ENCODE measurements at regions of chr6 and their contacts with region 1.

Region 1: GRCh38 chr6:53651764-53652401 is 13.7 kb downstream of the KLHL31 start:
- DNase-seq: peak; percentile 91

Region 2: GRCh38 chr6:53171605-53172446 is 480.1 kb before region 1 on chr6:
- intact Hi-C with region 1: loop called in 1 of 2 experiments (anchors 10 kb)
- DNase-seq: peak; percentile 97

Region 3: GRCh38 chr6:53492860-53493634 is 158.8 kb before region 1 on chr6:
- intact Hi-C with region 1: loop called in 1 of 2 experiments (anchors 10 kb)
- DNase-seq: no peak

Region 4: DNA sequence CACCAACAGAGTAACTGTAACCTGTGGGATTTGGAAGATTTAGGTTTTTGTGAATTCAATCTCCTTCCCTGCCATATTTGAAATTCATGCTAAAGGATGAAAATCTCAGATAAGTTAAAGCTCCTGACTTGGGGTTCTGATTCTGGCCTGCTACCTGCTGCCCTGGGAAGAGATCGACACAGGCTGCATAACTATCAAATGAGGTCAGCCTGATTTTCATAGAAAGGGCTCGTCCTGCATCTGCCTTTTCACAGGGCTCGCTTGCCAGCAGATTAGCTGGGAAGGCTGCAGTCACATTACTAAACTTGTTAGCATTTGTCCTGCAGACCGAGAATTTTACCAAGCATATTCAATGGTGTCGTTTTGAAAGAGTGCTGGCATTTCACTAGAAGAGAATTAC is 121.5 kb before region 1 on chr6:
- intact Hi-C with region 1: loop called in 1 of 2 experiments (anchors 10 kb)
- DNase-seq: no peak

Measured in posterior vena cava (tissue), 2 donors.